PC-3 (cell line): ENCODE measurements at regions of chr3 and their contacts with region 1.

Region 1: GRCh38 chr3:36525115-36525801 is 145.0 kb downstream of the STAC start:
- DNase-seq: peak; percentile 80
- ATAC-seq: peak; percentile 97
- H3K4me3 ChIP-seq: peak overlapping the region; percentile 37
- H3K27ac ChIP-seq: peak overlapping the region; percentile 85
- H3K4me1 ChIP-seq: peaks cover 15% of the 10 kb centered on the region
- H3K27me3 ChIP-seq: no peaks in the 10 kb centered on the region
- CTCF ChIP-seq: no peak

Region 2: GRCh38 chr3:36380221-36381031 is 144.8 kb before region 1 on chr3 and contains the start of gene STAC:
- CTCF ChIA-PET with region 1: no interaction called
- POLR2A ChIA-PET with region 1: no interaction called
- intact Hi-C with region 1: loop called (anchors 5 kb)
- DNase-seq: peak; percentile 71
- ATAC-seq: peak; percentile 94
- H3K4me3 ChIP-seq: peak within 1 kb of the TSS; percentile 74
- H3K27ac ChIP-seq: no peak within 1 kb of the TSS
- H3K4me1 ChIP-seq: peaks cover 5% of the 10 kb centered on the region; the same call in 1 of the 2 replicates
- H3K27me3 ChIP-seq: no peaks in the 10 kb centered on the region
- CTCF ChIP-seq: no peak
- total RNA-seq, gene STAC: 4.4 and 6.7 TPM in 2 replicates

Region 3: DNA sequence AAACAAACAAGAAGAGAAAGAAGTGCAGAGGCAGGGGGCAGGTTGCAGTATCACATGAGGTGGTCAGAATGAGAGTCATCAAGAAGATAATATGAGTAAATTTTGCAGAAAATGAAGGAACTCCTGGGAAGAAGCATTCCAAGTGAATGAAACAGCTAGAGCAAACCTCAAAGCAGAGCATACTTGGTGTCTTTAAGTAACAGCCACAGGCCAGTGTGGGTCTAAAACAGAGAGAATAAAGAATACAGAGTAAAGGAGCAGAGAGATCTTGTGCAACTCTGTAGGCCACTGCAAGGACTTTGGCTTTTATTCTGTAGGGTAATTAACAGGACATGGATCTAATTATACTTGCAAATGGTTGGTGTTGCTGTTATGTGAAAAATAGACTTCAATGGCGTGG is 63.7 kb before region 1 on chr3:
- CTCF ChIA-PET with region 1: no interaction called
- POLR2A ChIA-PET with region 1: no interaction called
- intact Hi-C with region 1: loop called (anchors 2 kb)
- DNase-seq: no peak
- ATAC-seq: no peak
- H3K4me3 ChIP-seq: no peak overlapping the region
- H3K27ac ChIP-seq: no peak overlapping the region
- H3K4me1 ChIP-seq: no peaks in the 10 kb centered on the region
- H3K27me3 ChIP-seq: no peaks in the 10 kb centered on the region
- CTCF ChIP-seq: no peak

Region 4: DNA sequence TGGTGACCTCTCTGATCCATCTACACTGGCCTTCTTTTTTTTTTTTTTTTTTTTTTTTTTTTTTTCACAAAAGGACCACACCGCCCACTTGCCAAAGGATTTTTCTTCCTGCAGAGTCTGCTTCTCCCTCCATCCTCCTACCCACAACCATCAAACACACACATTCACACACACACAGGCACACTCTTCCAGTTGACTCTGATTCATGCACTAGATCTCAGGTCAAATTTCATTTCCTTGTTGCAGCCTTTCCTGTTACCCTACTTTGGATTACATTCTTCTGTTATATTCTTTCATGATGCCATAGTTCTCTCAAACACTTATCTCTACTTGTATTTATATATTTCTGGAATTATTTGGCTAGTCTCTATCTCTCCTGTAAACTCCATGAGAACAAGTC is 11.1 kb before region 1 on chr3:
- CTCF ChIA-PET with region 1: no interaction called
- POLR2A ChIA-PET with region 1: interaction called, 12 read pairs
- intact Hi-C with region 1: no loop called
- DNase-seq: peak; percentile 36
- ATAC-seq: peak; percentile 67
- H3K4me3 ChIP-seq: no peak overlapping the region
- H3K27ac ChIP-seq: no peak overlapping the region
- H3K4me1 ChIP-seq: no peaks in the 10 kb centered on the region
- H3K27me3 ChIP-seq: no peaks in the 10 kb centered on the region
- CTCF ChIP-seq: no peak

Region 5: GRCh38 chr3:36615861-36616260 is 90.6 kb after region 1 on chr3:
- CTCF ChIA-PET with region 1: no interaction called
- POLR2A ChIA-PET with region 1: no interaction called
- intact Hi-C with region 1: no loop called
- DNase-seq: no peak
- ATAC-seq: no peak
- H3K4me3 ChIP-seq: no peak overlapping the region
- H3K27ac ChIP-seq: no peak overlapping the region
- H3K4me1 ChIP-seq: no peaks in the 10 kb centered on the region
- H3K27me3 ChIP-seq: no peaks in the 10 kb centered on the region
- CTCF ChIP-seq: no peak